ENCODE measurements at regions of chr20 and their contacts with region 1.

Region 1: DNA sequence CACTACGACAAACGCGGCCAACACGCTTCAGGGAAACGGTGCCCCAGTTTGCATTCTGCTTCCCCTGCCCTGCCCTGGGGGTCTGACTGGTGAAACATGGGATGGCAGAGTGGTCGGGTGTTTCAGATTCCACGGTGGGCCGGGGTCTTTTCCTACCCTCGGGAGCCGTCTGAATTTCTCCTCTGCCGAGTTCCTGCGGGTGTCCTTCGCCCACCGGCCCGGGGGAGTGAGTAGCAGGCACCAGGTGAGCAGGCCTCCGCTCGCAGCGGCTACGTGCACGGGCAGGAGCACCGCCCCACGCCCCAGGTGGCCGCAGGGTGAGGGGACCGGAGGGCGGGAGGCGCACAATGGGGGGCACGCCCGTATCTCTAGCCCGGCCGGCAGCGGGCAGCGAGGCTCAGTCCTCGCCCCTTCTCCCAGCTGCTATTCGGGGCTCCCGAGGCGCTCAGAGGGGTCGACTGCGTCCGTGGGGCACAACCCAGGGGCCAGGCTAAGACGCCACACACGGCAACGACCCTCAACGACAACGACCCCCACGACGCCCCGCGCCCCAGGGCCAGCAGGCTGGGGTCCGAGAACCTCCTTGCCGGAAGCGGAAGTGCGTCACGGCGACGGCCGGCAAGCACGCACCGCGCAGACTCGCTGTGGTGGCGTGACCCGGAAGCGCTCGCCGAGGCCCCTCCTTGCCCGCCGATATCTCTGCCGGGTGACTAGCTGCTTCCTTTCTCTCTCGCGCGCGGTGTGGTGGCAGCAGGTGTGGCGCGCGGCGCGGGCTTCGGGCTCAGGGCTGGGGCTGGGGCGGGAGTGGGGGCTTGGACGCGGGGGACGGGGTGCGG is at the start of gene RPS21:
- DNase-seq: peak; percentile 79 to 96 (median 92)

Region 2: GRCh38 chr20:62065669-62066338 is 320.8 kb before region 1 on chr20 and contains the start of gene TAF4:
- intact Hi-C with region 1: loop called (anchors 10 kb)
- DNase-seq: peak in 41 of 42 donors; percentile 44 to 90 (median 79)

Region 3: GRCh38 chr20:62182613-62183425 is 203.8 kb before region 1 on chr20 and contains the start of gene MTG2:
- intact Hi-C with region 1: loop called (anchors 10 kb)
- DNase-seq: peak; percentile 85 to 98 (median 94)

Region 4: DNA sequence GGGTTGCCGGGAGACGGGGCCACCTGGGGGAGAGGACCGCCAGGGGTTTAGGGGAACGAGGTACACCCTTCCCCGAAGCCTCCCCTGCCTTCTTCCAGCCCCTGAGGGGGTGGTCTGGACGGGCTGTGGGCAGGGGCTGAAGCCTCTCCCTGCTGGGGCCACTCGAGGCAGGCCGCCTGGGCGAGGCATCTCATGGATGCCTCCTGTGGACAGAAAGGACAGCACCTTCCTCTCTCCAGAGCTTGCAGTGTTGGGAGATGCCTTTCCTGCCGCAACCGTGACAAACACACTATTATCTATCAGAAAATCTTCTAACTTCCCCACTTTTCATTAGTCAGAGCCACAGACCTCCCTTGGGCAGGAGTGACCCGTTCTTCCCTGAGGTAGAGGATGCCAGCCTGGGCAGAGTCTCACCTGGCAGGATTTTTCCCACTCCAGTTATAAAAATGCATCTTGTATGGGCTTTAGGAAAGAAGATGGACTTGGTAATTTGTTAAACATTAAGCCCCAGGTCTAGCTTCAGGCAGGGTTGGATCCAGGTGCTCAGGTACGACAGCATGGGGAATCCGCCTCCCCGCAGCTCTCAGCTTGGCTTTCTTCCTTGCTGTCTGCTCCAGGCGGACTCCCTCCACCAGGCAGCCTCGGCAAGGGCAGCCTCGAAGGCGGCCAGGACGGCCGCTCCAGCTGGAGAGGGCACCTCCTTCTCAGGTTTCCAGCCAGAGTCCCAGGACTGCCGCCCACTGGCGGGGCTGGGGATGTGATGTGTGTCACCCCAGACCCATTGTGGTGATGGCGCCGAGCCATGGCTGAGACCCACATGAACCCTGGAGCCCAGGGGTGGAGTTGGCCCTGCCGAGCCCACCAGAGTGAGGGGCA is 177.5 kb before region 1 on chr20:
- intact Hi-C with region 1: no loop called
- DNase-seq: no peak

Region 5: GRCh38 chr20:62292108-62292507 is 94.5 kb before region 1 on chr20:
- intact Hi-C with region 1: no loop called
- DNase-seq: no peak

Region 6: GRCh38 chr20:62302341-62303058 is 84.1 kb before region 1 on chr20 and contains the start of gene ADRM1:
- intact Hi-C with region 1: loop called (anchors 2 kb)
- DNase-seq: peak; percentile 86 to 99 (median 97)

Measured in head of caudate nucleus (tissue), 42 donors.